ENCODE measurements at regions of chr5 and their contacts with region 1.

Region 1: DNA sequence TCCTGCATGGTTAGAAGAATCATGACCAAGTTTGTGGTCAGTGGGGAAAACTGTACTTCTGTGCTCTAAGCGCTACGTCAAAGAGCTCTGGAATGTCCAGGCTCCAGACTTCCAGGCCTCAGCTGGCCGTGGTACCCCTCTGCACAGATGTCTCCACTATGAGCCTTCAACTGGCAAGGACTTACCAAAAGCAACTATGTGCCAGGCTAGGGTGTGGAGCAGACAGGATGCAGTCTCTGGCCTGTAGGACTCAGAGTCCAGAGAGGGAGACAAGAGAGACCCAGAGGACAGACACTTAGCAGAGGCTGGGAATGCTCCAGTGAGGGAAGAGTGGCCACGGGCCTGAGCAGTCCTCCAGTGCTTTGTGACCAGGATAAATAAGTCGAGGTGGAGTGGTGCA is 31.0 kb upstream of the TCF7 start:
- DNase-seq: no peak
- ATAC-seq: no peak
- H3K4me3 ChIP-seq: no peak overlapping the region
- H3K4me3 Mint-ChIP-seq: peak overlapping the region in 1 of 3 donors; percentile 12
- H3K27ac ChIP-seq: no peak overlapping the region
- H3K27ac Mint-ChIP-seq: peak overlapping the region; percentile 69 to 70
- H3K4me1 ChIP-seq: peaks cover 46 to 79% of the 10 kb centered on the region in 2 experiments
- H3K4me1 Mint-ChIP-seq: peaks cover 78 to 87% (median 85%) of the 10 kb centered on the region in 3 donors
- H3K27me3 ChIP-seq: no peaks in the 10 kb centered on the region
- H3K27me3 Mint-ChIP-seq: no peaks in the 10 kb centered on the region

Region 2: GRCh38 chr5:134053840-134054338 is 29.6 kb before region 1 on chr5:
- CTCF ChIA-PET with region 1: interaction called in 1 of 2 experiments, 11 read pairs
- POLR2A ChIA-PET with region 1: no interaction called
- DNase-seq: peak in 1 of 35 experiments; percentile 52
- ATAC-seq: peak; percentile 82 to 95 (median 84)
- H3K4me3 ChIP-seq: peak overlapping the region in 1 of 2 donors; percentile 6
- H3K4me3 Mint-ChIP-seq: peak overlapping the region; percentile 21 to 67 (median 36)
- H3K27ac ChIP-seq: peak overlapping the region; percentile 44
- H3K27ac Mint-ChIP-seq: peak overlapping the region; percentile 91 to 94
- H3K4me1 ChIP-seq: peaks cover 27 to 40% of the 10 kb centered on the region in 2 experiments
- H3K4me1 Mint-ChIP-seq: peaks cover 49 to 54% (median 53%) of the 10 kb centered on the region in 3 donors
- H3K27me3 ChIP-seq: no peaks in the 10 kb centered on the region
- H3K27me3 Mint-ChIP-seq: no peaks in the 10 kb centered on the region

Region 3: DNA sequence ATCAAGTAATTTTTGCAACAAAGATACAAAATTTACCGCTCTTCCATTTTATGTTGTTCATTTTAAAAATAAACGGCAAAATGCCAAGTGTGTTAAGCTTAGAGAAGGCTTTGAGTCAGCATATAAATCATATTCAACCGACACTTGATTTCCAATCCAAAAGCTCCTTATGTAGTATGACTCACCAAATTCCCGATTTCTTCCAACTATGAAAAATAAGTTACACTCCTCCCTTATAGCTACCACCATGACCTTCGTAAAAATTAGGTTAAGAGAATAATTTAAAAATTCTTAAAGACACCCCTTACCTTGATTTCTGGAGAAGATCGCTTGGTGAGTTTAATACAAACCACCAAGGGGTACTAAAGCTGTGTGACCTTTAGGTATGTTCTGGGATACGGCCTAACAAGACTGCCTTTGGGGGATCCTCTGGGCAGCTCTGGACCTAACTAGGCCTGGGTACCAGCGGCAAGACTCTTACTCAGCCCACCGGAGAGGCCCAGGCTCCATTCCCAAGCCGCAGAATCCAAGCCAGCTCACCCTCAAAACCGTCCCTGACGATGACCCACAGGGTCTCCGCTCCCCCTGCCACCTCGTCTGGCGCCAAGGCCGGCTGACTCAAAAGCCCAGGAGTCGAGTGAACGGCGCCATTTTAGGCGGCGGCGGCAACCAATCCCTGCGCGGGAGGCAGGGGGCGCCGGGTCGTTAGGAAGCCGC is 141.5 kb after region 1 on chr5:
- CTCF ChIA-PET with region 1: no interaction called
- POLR2A ChIA-PET with region 1: no interaction called
- DNase-seq: peak in 28 of 35 experiments; percentile 26 to 77 (median 49)
- ATAC-seq: peak in 2 of 4 experiments; percentile 26 to 36
- H3K4me3 ChIP-seq: peak overlapping the region; percentile 89 to 94
- H3K4me3 Mint-ChIP-seq: peak overlapping the region; percentile 95 to 98 (median 96)
- H3K27ac ChIP-seq: peak overlapping the region; percentile 99
- H3K27ac Mint-ChIP-seq: peak overlapping the region; percentile 87
- H3K4me1 ChIP-seq: peaks cover 30 to 31% of the 10 kb centered on the region in 2 experiments
- H3K4me1 Mint-ChIP-seq: peaks cover 54 to 64% (median 63%) of the 10 kb centered on the region in 3 donors
- H3K27me3 ChIP-seq: no peaks in the 10 kb centered on the region
- H3K27me3 Mint-ChIP-seq: no peaks in the 10 kb centered on the region

Measured in T-cell (primary cell).